Left cardiac atrium (tissue), 4 donors: ENCODE measurements at regions of chr11 and their contacts with region 1.

Region 1: GRCh38 chr11:111841370-111842053 is 29.9 kb downstream of the ALG9 start:
- DNase-seq: peak; percentile 91
- ATAC-seq: peak; percentile 90

Region 2: GRCh38 chr11:111454561-111455192 is 386.8 kb before region 1 on chr11:
- intact Hi-C with region 1: loop called in 1 of 2 experiments (anchors 10 kb)
- DNase-seq: peak; percentile 40
- ATAC-seq: peak; percentile 14 to 54

Region 3: DNA sequence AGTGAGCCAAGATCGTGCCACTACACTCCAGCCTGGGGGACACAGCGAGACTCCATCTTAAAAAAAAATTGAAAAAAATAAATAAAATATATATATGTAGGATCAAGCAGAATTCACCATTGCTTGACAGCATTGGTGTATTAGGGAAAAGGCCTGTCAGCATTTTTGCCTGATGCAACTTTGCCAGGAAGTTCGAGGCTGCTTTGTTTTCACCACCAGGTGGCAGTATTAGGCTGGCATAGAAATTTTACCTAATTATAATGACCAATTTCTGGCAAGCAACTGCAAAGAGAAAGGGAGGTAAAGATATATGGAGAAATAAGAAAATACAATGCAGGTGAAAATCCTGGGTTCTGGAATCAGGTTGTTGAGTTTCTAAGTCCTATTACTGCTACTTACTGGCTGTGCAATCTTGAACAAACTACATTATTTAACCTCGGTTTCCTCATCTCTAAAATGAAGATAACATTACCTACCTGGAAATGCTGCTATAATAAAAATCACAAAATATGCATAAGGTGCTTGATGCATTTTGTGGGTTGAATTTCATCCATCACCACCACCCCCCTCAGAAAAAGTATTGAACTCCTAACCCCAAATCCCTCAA is 276.3 kb before region 1 on chr11:
- intact Hi-C with region 1: loop called (anchors 2 kb)
- DNase-seq: peak; percentile 48
- ATAC-seq: peak; percentile 36 to 55

Region 4: DNA sequence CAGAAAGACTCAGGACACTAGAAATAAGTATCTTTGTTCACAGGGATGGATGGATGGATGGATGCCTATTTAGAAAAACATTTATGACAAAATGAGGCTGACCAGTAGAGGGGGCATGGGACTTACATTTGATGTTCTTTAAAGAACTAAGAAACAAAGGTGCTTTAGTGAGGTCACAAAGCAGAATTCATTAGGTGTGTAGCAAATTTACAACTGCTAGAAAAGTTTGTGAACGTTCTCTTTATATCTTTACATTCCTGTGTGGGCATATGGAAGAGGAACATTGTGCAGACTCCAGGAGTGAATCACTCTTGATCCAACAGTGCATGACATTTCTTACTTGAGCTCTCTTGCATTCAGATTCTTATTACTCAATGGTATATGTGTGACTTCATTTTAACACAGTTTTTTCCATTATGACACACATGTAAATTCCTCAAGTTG is 255.1 kb before region 1 on chr11:
- intact Hi-C with region 1: loop called (anchors 5 to 10 kb)
- DNase-seq: no peak
- ATAC-seq: peak; percentile 37 to 44

Region 5: GRCh38 chr11:111601979-111602864 is 239.3 kb before region 1 on chr11 and contains the start of gene SIK2:
- intact Hi-C with region 1: loop called (anchors 5 to 10 kb)
- DNase-seq: peak; percentile 97
- ATAC-seq: peak; percentile 95 to 97
- total RNA-seq, gene SIK2: 24.3 to 51.6 TPM

Region 6: GRCh38 chr11:111777094-111778046 is 64.1 kb before region 1 on chr11:
- intact Hi-C with region 1: loop called in 1 of 2 experiments (anchors 5 kb)
- DNase-seq: no peak
- ATAC-seq: peak; percentile 84 to 88

Region 7: GRCh38 chr11:112042161-112042960 is 200.8 kb after region 1 on chr11:
- intact Hi-C with region 1: no loop called
- DNase-seq: no peak
- ATAC-seq: no peak